H1 (cell line): ENCODE measurements at regions of chr4 and their contacts with region 1.

Region 1: GRCh38 chr4:179151770-179152169 is 1709.5 kb upstream of the AGA start:
- DNase-seq: no peak
- H3K4me3 ChIP-seq: no peak overlapping the region
- H3K27ac ChIP-seq: no peak overlapping the region
- H3K4me1 ChIP-seq: peaks cover 0 to 3% (median 0%) of the 10 kb centered on the region in 4 experiments; a peak in 2 of 7 replicates
- H3K27me3 ChIP-seq: no peaks in the 10 kb centered on the region
- CTCF ChIP-seq: no peak
- EP300 ChIP-seq: no peak
- POLR2A ChIP-seq: no peak
- RAD21 ChIP-seq: no peak

Region 2: DNA sequence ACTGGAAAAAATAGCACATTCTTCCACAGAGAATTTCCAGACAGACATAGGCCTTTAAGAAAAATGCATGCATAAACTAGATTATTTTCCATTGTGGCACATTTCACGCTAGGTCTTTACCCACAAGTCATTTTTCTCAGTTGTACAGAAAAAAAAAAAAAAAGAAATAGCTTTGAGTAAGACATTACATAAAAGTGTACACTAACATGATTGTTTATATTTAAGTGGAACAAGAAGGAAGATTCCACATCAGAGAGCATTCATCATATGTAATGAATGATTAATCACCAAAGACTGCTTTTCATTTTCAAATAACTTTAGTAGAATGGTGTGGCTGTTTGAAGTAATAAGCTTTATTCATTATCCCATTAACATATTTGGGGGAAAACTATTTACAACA is 439.3 kb before region 1 on chr4:
- CTCF ChIA-PET with region 1: no interaction called
- POLR2A ChIA-PET with region 1: no interaction called
- DNase-seq: no peak
- H3K4me3 ChIP-seq: no peak overlapping the region
- H3K27ac ChIP-seq: no peak overlapping the region
- H3K4me1 ChIP-seq: no peaks in the 10 kb centered on the region
- H3K27me3 ChIP-seq: no peaks in the 10 kb centered on the region
- CTCF ChIP-seq: no peak
- EP300 ChIP-seq: no peak
- POLR2A ChIP-seq: no peak
- RAD21 ChIP-seq: no peak

Region 3: DNA sequence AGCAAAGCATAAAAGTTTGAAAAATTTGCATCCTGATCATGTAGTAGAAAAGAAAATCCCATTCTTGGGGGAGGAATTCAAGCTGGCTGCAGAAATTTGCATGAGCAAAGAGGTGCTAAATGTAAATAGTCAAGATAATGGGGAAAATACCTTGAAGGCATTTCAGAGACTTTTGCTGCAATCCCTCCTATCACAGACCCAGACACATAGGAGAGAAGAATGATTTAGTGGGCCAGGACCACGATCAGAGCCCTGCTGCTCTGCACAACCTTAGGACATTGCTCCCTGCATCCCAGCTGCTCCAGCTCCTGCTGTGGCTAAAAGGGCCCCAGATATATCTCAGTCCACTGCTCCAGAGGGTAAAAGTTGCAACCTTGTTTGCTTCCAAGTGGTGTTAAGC is 269.8 kb before region 1 on chr4:
- CTCF ChIA-PET with region 1: no interaction called
- POLR2A ChIA-PET with region 1: no interaction called
- DNase-seq: no peak
- H3K4me3 ChIP-seq: 0 out of 8 replicates have a peak overlapping the region, but pooled peaks of 1 of the 4 experiments have one; percentile 21
- H3K27ac ChIP-seq: no peak overlapping the region
- H3K4me1 ChIP-seq: no peaks in the 10 kb centered on the region
- H3K27me3 ChIP-seq: no peaks in the 10 kb centered on the region
- CTCF ChIP-seq: no peak
- EP300 ChIP-seq: no peak
- POLR2A ChIP-seq: no peak
- RAD21 ChIP-seq: no peak

Region 4: DNA sequence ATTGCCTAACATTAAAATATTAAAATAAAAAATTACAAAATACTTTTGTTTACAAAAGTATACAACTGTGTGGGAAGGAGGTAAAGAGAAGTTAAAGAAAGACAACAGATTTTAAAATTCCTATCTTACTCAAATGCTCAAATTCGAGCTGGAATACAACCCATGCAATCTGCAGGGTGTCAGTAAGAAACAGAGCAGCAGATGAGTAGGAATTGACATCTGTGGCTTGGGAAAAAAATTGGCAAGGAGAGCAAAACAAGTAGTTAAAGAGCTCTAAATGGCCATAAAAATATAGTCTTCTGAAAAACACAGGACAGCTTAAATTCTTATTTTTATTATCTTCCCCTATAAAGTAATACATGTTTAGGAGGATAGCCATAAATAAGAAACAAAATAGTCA is 100.6 kb before region 1 on chr4:
- CTCF ChIA-PET with region 1: no interaction called
- POLR2A ChIA-PET with region 1: no interaction called
- DNase-seq: no peak
- H3K4me3 ChIP-seq: no peak overlapping the region
- H3K27ac ChIP-seq: no peak overlapping the region
- H3K4me1 ChIP-seq: no peaks in the 10 kb centered on the region
- H3K27me3 ChIP-seq: no peaks in the 10 kb centered on the region
- CTCF ChIP-seq: no peak
- EP300 ChIP-seq: no peak
- POLR2A ChIP-seq: no peak
- RAD21 ChIP-seq: no peak

Region 5: GRCh38 chr4:179165000-179165738 is 13.4 kb after region 1 on chr4:
- CTCF ChIA-PET with region 1: interaction called, 7 read pairs
- POLR2A ChIA-PET with region 1: interaction called, 23 read pairs
- DNase-seq: no peak
- H3K4me3 ChIP-seq: peak overlapping the region; percentile 2 to 66 (median 26); a peak in 4 of 8 replicates
- H3K27ac ChIP-seq: no peak overlapping the region
- H3K4me1 ChIP-seq: peaks cover 0 to 10% (median 4%) of the 10 kb centered on the region in 4 experiments; a peak in 3 of 7 replicates
- H3K27me3 ChIP-seq: no peaks in the 10 kb centered on the region
- CTCF ChIP-seq: no peak
- EP300 ChIP-seq: no peak
- POLR2A ChIP-seq: peak in 1 of 2 experiments; percentile 54; a peak in 2 of 3 replicates
- RAD21 ChIP-seq: no peak